A673 (cell line): ENCODE measurements at regions of chr21 and their contacts with region 1.

Region 1: GRCh38 chr21:43921979-43922945 is 57.2 kb downstream of the AGPAT3 start:
- DNase-seq: no peak
- H3K4me3 ChIP-seq: no peak overlapping the region
- H3K27ac ChIP-seq: peak overlapping the region; percentile 60
- H3K4me1 ChIP-seq: peaks cover 23% of the 10 kb centered on the region
- H3K27me3 ChIP-seq: no peaks in the 10 kb centered on the region
- CTCF ChIP-seq: no peak

Region 2: GRCh38 chr21:43866260-43866629 is 56.0 kb before region 1 on chr21:
- CTCF ChIA-PET with region 1: no interaction called
- POLR2A ChIA-PET with region 1: no interaction called
- intact Hi-C with region 1: loop called (anchors 10 kb)
- DNase-seq: peak; percentile 71
- H3K4me3 ChIP-seq: peak overlapping the region; percentile 94
- H3K27ac ChIP-seq: peak overlapping the region; percentile 90
- H3K4me1 ChIP-seq: peaks cover 13% of the 10 kb centered on the region
- H3K27me3 ChIP-seq: no peaks in the 10 kb centered on the region
- CTCF ChIP-seq: no peak

Region 3: DNA sequence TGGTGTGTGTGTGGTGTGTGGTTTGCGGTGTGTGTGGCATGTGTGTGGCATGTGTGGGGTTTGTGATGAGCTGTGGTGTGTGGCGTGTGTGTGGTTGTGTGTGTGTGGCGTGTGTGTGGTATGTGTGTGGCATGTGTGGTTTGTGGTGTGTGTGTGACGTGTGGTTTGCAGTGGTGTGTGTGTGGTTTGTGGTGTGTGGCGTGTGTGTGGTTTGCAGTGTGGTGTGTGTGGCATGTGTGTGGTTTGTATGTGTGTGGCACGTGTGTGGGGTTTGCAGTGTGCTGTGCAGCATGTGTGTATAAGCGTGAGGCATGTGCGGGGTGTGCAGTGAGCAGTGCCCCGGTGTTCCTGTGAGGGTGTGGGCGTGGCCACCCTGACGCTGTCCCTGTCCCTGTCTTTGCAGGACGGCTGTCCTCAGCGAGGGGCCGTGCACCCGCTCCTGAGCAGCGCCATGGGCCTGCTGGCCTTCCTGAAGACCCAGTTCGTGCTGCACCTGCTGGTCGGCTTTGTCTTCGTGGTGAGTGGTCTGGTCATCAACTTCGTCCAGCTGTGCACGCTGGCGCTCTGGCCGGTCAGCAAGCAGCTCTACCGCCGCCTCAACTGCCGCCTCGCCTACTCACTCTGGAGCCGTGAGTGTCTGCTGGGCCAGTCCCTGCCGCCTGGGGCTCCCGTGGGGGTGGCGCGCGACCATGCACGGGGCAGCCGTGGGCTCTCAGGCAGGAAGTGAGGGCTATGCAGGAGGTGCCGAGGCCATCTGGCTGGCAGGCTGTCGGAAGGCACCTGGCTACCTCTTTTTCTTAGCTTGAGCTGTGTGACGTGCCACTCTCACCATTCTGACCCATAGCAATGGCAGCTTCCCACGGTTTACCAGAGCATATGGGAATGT is 37.2 kb after region 1 on chr21:
- CTCF ChIA-PET with region 1: no interaction called
- POLR2A ChIA-PET with region 1: no interaction called
- intact Hi-C with region 1: no loop called
- DNase-seq: no peak
- H3K4me3 ChIP-seq: no peak overlapping the region
- H3K27ac ChIP-seq: no peak overlapping the region
- H3K4me1 ChIP-seq: peaks cover 17% of the 10 kb centered on the region
- H3K27me3 ChIP-seq: no peaks in the 10 kb centered on the region
- CTCF ChIP-seq: no peak